Heart left ventricle (tissue), 16 donors: ENCODE measurements at regions of chr7 and their contacts with region 1.

Region 1: DNA sequence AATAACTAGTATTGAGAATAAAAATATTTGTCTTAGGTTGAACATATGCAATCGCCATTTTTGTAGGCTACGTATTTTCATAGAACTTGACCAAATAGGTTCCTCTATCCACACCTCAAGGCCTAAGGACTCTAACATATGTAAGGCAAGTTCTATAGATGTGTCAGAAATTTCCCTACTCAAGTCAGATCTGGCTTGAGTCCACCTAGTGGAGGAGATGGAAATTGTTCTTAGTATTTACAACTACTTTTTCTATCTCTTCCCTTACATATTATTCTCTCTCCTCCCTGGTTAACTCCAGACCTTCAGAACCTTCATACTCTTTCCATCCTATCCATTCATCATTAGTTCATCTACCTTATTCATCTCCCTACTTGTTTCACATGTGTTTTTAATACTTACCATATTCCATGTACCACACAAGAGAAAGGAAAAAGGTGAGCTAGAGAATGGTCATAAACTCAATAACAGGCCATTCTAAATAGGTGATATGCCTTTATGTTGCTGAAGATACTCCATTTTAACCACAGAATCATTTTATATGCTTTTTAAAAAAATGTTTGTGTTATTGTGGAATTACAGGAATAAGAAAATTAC is 174.5 kb upstream of the HDAC9 start:
- DNase-seq: no peak
- ATAC-seq: no peak
- H3K4me3 ChIP-seq: no peak overlapping the region
- H3K27ac ChIP-seq: no peak overlapping the region
- H3K4me1 ChIP-seq: peaks cover 0 to 23% (median 0%) of the 10 kb centered on the region in 12 donors
- H3K27me3 ChIP-seq: no peaks in the 10 kb centered on the region
- CTCF ChIP-seq: peak; percentile 34 to 58 (median 48)
- POLR2A ChIP-seq: no peak

Region 2: DNA sequence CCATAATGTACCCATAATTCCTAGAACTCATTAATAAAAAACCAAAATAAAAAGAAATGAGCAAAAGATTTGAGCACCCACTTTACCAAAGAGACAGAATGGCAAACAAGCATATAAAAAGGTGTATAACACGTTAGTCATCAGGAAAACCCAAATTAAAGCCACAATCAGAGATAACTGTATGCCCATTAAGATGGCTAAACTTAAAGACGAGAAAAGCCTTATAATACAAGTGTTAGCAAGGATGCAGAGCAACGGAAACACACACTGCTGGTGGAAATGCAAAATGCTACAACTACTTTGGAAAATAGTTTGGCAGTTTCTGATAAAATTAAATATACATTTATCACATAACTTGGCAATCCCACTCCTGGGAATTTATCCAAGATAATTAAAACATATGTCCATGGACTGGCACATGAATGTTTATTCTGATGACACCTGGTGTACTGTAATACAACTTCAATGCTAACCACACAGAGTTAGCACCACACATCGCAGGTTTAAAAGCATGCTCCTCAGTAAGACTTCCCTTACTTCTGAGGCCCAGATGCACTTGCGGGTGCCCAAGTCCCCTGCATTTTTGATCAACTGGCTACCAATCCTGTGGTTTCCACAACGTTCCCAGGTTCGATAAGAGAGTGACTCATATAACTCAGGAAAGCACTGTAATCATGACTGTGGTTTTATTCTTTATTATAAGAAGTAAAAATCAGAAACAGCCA is 539.4 kb before region 1 on chr7:
- intact Hi-C with region 1: loop called in 1 of 10 experiments (anchors 10 kb)
- DNase-seq: no peak
- ATAC-seq: no peak
- H3K4me3 ChIP-seq: no peak overlapping the region
- H3K27ac ChIP-seq: no peak overlapping the region
- H3K4me1 ChIP-seq: no peaks in the 10 kb centered on the region
- H3K27me3 ChIP-seq: no peaks in the 10 kb centered on the region
- CTCF ChIP-seq: no peak
- POLR2A ChIP-seq: no peak

Region 3: DNA sequence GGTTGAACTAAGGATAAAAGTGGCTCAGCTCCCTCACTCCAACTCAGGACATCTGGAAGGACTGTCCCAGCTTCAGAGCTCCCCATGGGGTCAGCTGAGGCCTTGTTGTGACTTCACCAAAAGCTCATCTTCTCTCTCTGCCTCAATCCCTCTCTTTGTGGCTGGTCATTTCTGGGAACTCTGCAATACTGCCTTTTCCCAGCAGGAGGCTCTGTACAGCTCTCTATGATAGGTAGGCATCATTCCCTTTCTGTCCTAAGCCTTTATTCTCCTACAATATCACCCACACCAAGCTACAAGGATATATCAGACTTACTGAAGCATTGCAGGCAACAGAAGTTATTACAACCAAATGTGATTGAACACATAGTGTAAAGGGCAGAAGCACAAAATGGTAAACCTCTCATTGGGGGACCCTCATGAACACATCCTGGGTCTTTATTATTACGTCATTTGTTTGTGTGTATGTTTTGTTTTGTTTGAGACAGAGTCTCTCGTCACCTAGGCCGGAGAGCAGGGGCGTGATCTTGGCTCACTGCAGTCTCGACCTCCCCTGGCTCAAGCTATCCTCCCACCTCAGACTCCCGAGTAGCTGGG is 256.7 kb before region 1 on chr7:
- intact Hi-C with region 1: loop called in 1 of 10 experiments (anchors 10 kb)
- DNase-seq: peak in 2 of 5 donors; percentile 14 to 18
- ATAC-seq: peak in 2 of 4 donors; percentile 36 to 56
- H3K4me3 ChIP-seq: no peak overlapping the region
- H3K27ac ChIP-seq: no peak overlapping the region
- H3K4me1 ChIP-seq: no peaks in the 10 kb centered on the region
- H3K27me3 ChIP-seq: no peaks in the 10 kb centered on the region
- CTCF ChIP-seq: peak; percentile 30 to 67 (median 58)
- POLR2A ChIP-seq: no peak

Region 4: DNA sequence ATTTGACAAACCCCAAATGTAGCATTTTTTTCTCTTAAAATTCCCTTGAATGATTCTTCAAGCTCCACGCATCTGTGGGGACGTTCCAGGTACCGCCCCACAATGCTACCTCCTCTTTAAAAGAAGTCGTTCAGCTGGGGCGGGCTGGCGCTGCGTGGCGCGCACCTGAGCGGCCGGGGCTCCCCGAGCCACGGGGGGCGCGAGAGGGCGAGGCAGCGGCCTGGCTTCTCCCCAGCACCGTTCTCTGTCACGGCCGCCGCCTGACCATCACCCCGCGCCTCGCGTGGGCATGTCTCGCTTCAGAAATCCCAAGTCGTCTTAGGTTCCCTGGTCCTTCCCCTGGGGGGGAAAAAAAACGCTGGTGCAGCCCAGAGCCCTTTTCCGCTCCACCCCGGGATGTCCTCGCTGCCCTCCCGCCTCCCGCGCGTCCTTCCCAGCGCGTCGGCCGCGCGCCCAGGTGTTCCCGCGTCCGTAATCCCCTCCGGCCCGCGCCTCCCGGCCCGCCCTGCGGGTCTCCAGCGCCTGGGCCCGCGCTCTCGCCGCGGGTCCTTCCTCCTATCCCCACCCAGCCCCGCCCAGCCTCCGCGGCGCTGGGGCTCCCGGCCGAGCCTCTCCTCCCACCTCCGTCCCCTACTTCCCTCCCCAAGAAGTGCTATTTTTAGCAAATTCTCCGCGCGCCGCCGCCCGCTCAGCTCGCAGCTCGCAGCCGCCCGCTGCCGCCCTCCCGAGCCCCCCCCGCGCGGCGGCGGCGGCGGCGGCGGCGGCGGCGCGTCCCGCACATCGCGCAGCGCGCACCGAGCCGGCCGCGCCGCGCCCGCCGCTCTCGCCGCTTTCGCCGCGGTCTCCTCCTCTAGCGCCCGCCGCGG is 234.7 kb before region 1 on chr7:
- intact Hi-C with region 1: loop called in 1 of 10 experiments (anchors 10 kb)
- DNase-seq: peak; percentile 39 to 71 (median 66)
- ATAC-seq: peak; percentile 24 to 89 (median 78)
- H3K4me3 ChIP-seq: peak overlapping the region; percentile 64 to 93 (median 83)
- H3K27ac ChIP-seq: peak overlapping the region in 10 of 12 donors; percentile 4 to 83 (median 74)
- H3K4me1 ChIP-seq: peaks cover 0 to 18% (median 9%) of the 10 kb centered on the region in 12 donors
- H3K27me3 ChIP-seq: peaks cover 0 to 23% (median 0%) of the 10 kb centered on the region in 9 donors
- CTCF ChIP-seq: peak in 7 of 12 donors; percentile 13 to 45 (median 27)
- POLR2A ChIP-seq: no peak

Region 5: DNA sequence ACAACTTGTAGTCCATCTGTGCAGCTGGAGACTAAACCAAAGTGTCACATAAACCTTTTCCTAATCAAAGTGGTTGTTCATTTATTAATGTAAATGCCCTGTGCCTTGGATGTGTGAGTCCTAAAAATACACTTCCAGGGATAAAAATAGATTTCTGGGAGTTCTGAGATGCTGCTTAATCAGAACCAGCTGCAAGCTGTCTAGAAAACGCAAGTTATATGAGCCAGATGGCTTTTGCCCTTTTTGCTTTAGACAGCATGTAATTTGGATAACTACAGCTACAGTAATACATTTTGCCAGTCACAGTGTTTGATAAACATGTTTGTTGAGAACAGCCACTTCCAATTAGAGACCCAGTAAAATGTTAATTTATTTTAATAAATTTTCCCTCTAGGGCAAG is 108.3 kb before region 1 on chr7:
- intact Hi-C with region 1: loop called in 1 of 10 experiments (anchors 10 kb)
- DNase-seq: peak in 1 of 5 donors; percentile 16
- ATAC-seq: peak; percentile 51 to 87 (median 78)
- H3K4me3 ChIP-seq: no peak overlapping the region
- H3K27ac ChIP-seq: peak overlapping the region in 9 of 12 donors; percentile 6 to 61 (median 53)
- H3K4me1 ChIP-seq: peaks cover 0 to 26% (median 11%) of the 10 kb centered on the region in 12 donors
- H3K27me3 ChIP-seq: no peaks in the 10 kb centered on the region
- CTCF ChIP-seq: no peak
- POLR2A ChIP-seq: no peak

Region 6: DNA sequence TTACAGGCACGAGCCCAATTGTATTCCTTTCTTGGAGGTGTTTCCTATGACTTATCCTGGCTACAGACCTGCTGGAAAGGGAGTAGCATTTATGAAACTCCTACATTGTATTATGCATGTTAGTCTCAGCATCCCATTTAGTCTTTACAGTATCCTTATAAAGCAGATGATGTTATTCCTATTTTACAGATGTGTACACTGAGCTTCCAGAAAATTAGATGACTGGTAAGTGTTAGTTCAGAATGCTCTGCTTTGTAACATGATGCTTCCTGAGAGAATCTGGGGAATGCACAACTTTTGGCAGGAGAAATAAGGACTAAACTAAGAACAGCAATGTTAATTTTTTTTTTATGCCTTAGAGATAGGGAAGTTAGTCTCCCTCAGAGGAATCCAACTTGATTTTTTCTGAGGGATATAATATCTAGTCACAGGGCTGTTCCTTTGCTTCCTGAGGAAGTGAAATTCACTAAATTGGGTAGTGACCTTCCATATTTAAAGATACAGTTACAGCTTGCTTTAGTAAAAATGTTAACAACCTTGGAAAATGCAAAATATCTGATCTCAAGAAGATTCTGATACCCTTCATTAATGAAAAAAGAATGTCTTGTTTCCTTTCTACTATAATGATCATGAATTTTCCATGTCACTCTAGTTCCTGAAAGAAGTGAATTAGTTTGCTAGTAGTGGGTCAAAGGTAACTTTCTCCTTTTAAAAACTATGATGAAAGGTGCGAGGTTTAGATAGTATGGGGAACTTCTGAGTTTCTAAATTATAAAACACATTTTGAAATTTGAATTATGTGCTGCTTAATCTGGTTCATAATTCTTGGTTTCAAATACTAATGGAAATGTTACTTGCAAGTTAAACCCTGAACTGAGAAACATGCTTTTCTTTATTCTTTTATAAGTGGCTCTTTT is 99.4 kb before region 1 on chr7:
- intact Hi-C with region 1: loop called in 2 of 10 experiments (anchors 10 kb)
- DNase-seq: no peak
- ATAC-seq: peak in 3 of 4 donors; percentile 27 to 50 (median 43)
- H3K4me3 ChIP-seq: no peak overlapping the region
- H3K27ac ChIP-seq: peak overlapping the region in 4 of 12 donors; percentile 2 to 57 (median 11)
- H3K4me1 ChIP-seq: peaks cover 0 to 60% (median 7%) of the 10 kb centered on the region in 12 donors
- H3K27me3 ChIP-seq: no peaks in the 10 kb centered on the region
- CTCF ChIP-seq: no peak
- POLR2A ChIP-seq: no peak